ENCODE measurements at regions of chr5 and their contacts with region 1.

Region 1: GRCh38 chr5:138449501-138450239 is 10.8 kb downstream of the REEP2 start:
- DNase-seq: peak; percentile 82
- H3K4me3 Mint-ChIP-seq: no peak overlapping the region
- H3K27ac Mint-ChIP-seq: no peak overlapping the region
- H3K4me1 Mint-ChIP-seq: peaks cover 5% of the 10 kb centered on the region
- H3K27me3 Mint-ChIP-seq: peaks cover 3% of the 10 kb centered on the region

Region 2: GRCh38 chr5:137847687-137848086 is 602.0 kb before region 1 on chr5:
- CTCF ChIA-PET with region 1: no interaction called
- POLR2A ChIA-PET with region 1: no interaction called
- DNase-seq: no peak
- H3K4me3 Mint-ChIP-seq: no peak overlapping the region
- H3K27ac Mint-ChIP-seq: no peak overlapping the region
- H3K4me1 Mint-ChIP-seq: no peaks in the 10 kb centered on the region
- H3K27me3 Mint-ChIP-seq: no peaks in the 10 kb centered on the region

Region 3: DNA sequence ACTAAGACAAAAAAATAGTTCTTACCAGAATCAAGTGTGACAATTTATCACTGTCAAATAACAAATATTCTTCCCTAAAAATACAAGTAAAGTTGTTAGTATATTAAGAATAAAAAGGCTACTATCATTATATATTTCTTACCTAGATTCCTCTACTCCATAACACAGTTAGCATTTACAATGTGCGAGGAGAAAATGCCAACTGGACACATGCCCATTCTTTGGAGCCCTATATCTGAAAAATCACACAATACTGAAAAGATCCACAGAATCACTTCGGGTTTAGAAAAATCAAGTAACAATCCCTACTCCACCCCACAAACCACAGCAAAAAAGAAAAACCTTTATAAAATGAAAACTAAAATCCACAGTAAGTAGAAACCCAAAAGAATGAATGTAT is 489.5 kb before region 1 on chr5:
- CTCF ChIA-PET with region 1: no interaction called
- POLR2A ChIA-PET with region 1: no interaction called
- DNase-seq: no peak
- H3K4me3 Mint-ChIP-seq: no peak overlapping the region
- H3K27ac Mint-ChIP-seq: no peak overlapping the region
- H3K4me1 Mint-ChIP-seq: no peaks in the 10 kb centered on the region
- H3K27me3 Mint-ChIP-seq: no peaks in the 10 kb centered on the region

Region 4: GRCh38 chr5:138438724-138439476 is 10.8 kb before region 1 on chr5 and contains the start of gene REEP2:
- CTCF ChIA-PET with region 1: interaction called, 11 read pairs
- POLR2A ChIA-PET with region 1: no interaction called
- DNase-seq: peak; percentile 56
- H3K4me3 Mint-ChIP-seq: peak within 1 kb of the TSS; percentile 67
- H3K27ac Mint-ChIP-seq: no peak within 1 kb of the TSS
- H3K4me1 Mint-ChIP-seq: peaks cover 7% of the 10 kb centered on the region
- H3K27me3 Mint-ChIP-seq: peaks cover 5% of the 10 kb centered on the region
- total RNA-seq, gene REEP2: 0.76 to 1.1 TPM

Region 5: DNA sequence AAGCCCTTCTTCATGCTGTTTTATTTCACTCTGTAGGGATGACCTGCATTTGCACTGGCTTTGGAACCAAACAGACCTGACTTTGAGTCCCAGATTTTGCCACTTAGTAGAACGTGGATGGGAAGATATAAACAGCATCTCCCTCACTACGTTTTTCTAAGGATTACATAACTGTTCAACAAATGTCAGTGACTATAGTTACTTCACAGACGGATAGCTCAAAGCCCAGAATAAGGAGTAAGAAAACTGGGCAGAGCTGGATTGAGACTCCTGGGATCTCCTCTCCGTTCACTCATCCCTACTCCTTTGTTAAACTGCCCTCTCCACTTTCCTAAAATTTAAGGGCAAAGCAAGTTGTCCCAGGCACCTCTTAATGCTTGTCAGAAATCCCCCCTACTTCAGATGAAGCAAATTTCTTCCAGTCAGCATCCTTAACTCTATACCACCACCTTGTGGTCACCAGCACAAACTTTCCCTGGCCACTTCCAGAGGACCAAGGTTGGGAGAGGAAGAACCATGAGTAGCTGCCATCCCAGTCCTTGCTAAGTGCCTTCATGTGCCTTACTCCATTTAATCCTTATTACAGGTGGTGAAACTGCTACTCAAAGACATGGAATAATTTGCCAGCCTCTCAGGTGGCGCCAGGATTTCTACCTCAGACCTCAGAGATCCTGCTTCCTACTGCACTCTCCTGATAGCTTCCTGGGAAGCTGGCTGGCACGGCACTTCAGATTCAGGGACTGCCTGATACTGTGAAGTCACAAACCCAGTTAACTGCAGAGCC is 54.0 kb after region 1 on chr5:
- CTCF ChIA-PET with region 1: interaction called, 37 read pairs
- POLR2A ChIA-PET with region 1: interaction called, 3 read pairs
- DNase-seq: peak; percentile 28
- H3K4me3 Mint-ChIP-seq: no peak overlapping the region
- H3K27ac Mint-ChIP-seq: no peak overlapping the region
- H3K4me1 Mint-ChIP-seq: no peaks in the 10 kb centered on the region
- H3K27me3 Mint-ChIP-seq: no peaks in the 10 kb centered on the region

Region 6: DNA sequence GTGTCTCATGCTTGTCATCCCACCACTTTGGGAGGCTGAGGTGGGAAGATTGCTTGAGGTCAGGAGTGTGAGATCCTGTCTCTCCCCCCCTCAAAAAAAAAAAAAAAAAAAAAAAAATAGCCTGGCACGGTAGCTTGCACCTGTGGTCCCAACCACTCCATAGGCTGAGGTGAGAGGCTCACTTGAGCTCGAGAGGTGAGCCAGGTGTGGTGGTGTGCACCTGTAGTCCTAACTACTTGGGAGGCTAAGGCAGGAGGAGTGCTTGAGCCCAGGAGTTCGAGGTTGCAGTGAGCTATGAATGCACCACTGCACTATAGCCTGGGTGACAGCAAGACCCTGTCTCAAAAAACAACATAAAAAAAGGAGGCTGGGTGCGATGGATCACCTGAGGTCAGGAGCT is 103.0 kb after region 1 on chr5:
- CTCF ChIA-PET with region 1: interaction called, 15 read pairs
- POLR2A ChIA-PET with region 1: no interaction called
- DNase-seq: no peak
- H3K4me3 Mint-ChIP-seq: no peak overlapping the region
- H3K27ac Mint-ChIP-seq: peak overlapping the region; percentile 28
- H3K4me1 Mint-ChIP-seq: peaks cover 13% of the 10 kb centered on the region
- H3K27me3 Mint-ChIP-seq: no peaks in the 10 kb centered on the region

Region 7: GRCh38 chr5:138963763-138964371 is 514.2 kb after region 1 on chr5:
- CTCF ChIA-PET with region 1: no interaction called
- POLR2A ChIA-PET with region 1: no interaction called
- DNase-seq: no peak
- H3K4me3 Mint-ChIP-seq: no peak overlapping the region
- H3K27ac Mint-ChIP-seq: no peak overlapping the region
- H3K4me1 Mint-ChIP-seq: no peaks in the 10 kb centered on the region
- H3K27me3 Mint-ChIP-seq: no peaks in the 10 kb centered on the region